ENCODE measurements at regions of chr5 and their contacts with region 1.

Region 1: DNA sequence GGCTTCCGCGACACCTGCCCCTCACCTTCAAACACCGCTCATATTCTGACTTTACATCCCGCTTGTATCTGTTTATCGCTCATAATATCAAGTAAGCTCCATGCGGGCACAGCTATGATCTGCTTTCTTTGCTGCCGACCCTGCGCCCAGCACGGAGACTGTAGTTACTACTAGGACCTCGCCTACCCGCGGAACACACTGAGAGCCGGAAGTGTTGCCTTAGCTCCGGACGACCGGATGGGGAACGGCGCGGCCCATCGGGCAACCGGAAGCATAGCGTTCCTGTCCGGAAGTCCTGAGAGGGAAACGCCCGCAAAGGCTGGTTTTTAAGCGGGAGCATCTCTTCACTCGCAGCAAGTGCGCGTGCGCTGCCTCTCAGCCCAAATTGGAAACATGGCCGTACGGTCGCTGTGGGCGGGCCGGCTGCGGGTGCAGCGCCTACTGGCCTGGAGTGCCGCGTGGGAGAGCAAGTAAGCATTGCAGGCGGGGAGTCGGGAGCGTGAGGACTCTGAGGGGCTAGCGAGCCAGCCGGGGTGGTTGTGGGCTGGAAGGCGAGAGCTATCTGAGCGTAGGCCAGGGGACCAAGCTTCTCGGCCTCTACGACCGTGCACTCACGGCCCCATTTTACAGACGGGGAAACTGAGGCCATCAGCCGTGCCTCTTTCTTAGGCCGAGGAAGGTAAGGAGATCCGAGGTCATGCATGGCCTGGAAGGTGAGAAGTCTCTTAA is at the start of gene GRPEL2:
- DNase-seq: peak; percentile 95 to 98 (median 98)
- ATAC-seq: peak; percentile 95 to 98 (median 98)
- H3K4me3 ChIP-seq: peak within 1 kb of the TSS; percentile 49 to 86 (median 74)
- H3K27ac ChIP-seq: peak within 1 kb of the TSS; percentile 69 to 93 (median 86)
- H3K4me1 ChIP-seq: peaks cover 0 to 52% (median 16%) of the 10 kb centered on the region in 12 donors
- H3K27me3 ChIP-seq: no peaks in the 10 kb centered on the region
- CTCF ChIP-seq: no peak
- POLR2A ChIP-seq: peak in 1 of 2 donors; percentile 68
- total RNA-seq, gene GRPEL2: 6.7 to 14.0 (median 10.2) TPM

Region 2: DNA sequence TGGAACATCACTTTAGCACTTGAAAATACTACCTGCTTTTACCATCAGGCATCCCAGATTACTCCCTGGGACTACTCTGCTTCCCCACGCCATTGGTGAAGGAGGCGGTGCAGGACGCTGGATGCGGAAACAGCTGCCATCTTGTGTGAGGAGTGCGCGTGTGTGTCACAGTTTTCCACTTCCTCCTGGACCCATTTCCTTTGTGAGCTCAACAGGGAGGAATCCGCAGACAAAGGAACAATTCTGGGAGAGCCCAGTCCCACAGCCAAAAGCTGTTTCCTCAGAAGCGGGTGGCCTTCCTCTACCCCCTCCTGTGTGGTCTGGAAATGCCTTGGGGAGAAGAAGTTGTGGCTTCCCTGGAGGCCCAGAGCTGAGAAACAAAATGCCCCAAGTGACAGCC is 56.9 kb before region 1 on chr5:
- intact Hi-C with region 1: loop called in 1 of 10 experiments (anchors 5 kb)
- DNase-seq: peak in 4 of 5 donors; percentile 71 to 82 (median 80)
- ATAC-seq: peak; percentile 37 to 85 (median 61)
- H3K4me3 ChIP-seq: peak overlapping the region in 4 of 12 donors; percentile 5 to 14 (median 8)
- H3K27ac ChIP-seq: peak overlapping the region; percentile 64 to 92 (median 86)
- H3K4me1 ChIP-seq: peaks cover 8 to 97% (median 78%) of the 10 kb centered on the region in 12 donors
- H3K27me3 ChIP-seq: no peaks in the 10 kb centered on the region
- CTCF ChIP-seq: no peak
- POLR2A ChIP-seq: no peak

Region 3: GRCh38 chr5:150853561-150853960 is 1508.2 kb after region 1 on chr5:
- intact Hi-C with region 1: no loop called
- DNase-seq: no peak
- ATAC-seq: no peak
- H3K4me3 ChIP-seq: no peak overlapping the region
- H3K27ac ChIP-seq: no peak overlapping the region
- H3K4me1 ChIP-seq: no peaks in the 10 kb centered on the region
- H3K27me3 ChIP-seq: no peaks in the 10 kb centered on the region
- CTCF ChIP-seq: no peak
- POLR2A ChIP-seq: no peak